Endothelial cell of umbilical vein (primary cell): ENCODE measurements at regions of chr14 and their contacts with region 1.

Region 1: DNA sequence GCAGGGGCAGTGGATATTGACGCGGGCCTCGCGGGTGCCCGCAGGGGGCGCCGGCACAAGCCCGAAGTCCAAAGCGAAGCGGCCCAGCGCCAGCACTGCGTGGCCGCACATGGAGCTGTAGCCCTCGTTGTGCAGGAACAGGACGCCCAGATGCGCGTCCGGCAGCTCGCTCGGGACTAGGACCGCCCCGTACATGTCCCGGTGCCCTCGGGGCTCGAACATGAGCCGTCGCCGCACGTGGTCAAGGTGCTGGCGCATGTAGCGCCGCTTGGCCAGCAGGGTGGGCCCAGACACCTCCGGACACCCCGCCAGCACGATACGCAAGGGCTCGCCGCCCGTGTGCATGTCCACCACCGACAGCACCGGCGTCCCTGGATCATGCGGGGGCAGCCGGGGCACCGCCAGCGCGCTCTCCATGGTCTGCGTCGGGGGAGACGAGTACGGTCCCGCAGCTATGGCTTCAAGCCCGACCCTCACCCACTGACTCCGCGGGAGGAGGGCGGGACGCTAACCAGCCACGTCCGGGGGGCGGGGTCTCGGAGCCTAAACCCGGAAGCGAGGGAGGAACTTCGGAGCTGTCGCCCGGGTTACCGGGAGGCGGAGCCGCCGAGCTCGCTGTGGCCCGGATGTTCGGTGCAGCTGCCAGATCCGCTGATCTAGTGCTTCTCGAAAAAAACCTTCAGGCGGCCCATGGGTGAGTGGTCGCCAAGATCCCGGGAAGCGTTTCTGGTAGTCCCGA is at the starts of genes JKAMP and L3HYPDH:
- DNase-seq: peak; percentile 96
- H3K4me3 ChIP-seq: peak within 1 kb of the TSS; percentile 70 to 98 (median 96)
- H3K27ac ChIP-seq: peak within 1 kb of the TSS; percentile 80
- H3K4me1 ChIP-seq: peaks cover 31% of the 10 kb centered on the region
- H3K27me3 ChIP-seq: no peaks in the 10 kb centered on the region
- CTCF ChIP-seq: peak; percentile 62 to 85
- POLR2A ChIP-seq: peak; percentile 92
- total RNA-seq, gene JKAMP: 30.8 and 39.8 TPM in 2 replicates
- total RNA-seq, gene L3HYPDH: 30.2 and 31.0 TPM in 2 replicates

Region 2: DNA sequence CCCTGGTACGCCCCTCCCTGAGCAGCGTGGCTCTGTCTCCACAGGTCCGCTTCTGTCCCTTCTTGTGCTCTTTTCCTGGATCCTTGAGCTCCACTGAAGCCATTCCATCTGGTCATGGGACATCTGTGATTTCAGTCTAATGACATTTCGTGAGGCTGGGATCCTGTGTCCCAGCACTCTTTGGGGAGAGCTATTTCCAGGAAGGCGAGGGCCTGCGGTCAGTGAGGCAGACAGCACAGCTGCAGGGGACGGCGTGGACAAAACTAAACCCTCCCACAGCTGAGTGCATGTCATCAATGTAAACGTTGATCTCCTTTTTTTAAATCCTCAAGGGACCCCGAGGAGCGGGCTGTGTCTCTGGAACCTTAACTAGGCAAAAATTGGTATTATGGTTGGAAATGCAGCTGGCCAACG is 718.6 kb before region 1 on chr14:
- CTCF ChIA-PET with region 1: no interaction called
- POLR2A ChIA-PET with region 1: no interaction called
- dilution Hi-C with region 1: no loop called
- intact Hi-C with region 1: no loop called
- DNase-seq: no peak
- H3K4me3 ChIP-seq: no peak overlapping the region
- H3K27ac ChIP-seq: no peak overlapping the region
- H3K4me1 ChIP-seq: no peaks in the 10 kb centered on the region
- H3K27me3 ChIP-seq: no peaks in the 10 kb centered on the region
- CTCF ChIP-seq: no peak
- POLR2A ChIP-seq: no peak

Region 3: DNA sequence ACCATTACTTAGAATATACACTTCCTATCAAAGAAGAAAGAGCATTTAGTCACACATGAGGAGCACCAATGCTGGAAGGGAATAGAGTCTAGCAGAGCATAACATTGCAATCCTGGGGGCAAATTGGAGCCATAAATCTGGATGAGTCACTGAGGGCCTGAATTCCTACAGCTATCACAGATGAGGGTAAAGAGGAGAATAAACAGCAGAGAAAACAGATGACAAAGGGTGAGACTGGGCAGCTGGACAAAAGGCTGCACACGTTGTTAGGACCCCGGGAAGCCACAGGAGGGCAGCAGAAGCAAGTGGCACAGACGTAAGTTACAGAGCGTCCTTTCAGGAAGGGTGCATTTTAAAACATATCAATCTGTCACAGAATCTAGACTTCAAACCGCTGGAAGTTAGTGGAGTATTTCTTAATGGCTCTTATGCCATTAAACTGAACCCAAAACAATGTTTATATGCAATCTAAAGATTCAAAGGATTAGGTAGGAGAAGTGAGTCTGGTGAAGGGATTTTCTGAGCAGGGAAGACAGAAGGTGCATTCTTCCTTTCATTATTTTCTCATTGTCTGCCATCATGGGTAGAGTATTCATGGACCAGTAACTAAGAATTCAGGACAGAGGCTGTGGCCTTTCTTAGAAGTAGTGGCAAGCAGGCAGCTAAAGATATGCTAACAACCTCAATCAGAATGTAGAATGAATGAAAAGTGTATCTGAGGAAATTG is 455.4 kb before region 1 on chr14:
- CTCF ChIA-PET with region 1: no interaction called
- POLR2A ChIA-PET with region 1: no interaction called
- dilution Hi-C with region 1: no loop called
- intact Hi-C with region 1: loop called (anchors 1 kb)
- DNase-seq: peak; percentile 66
- H3K4me3 ChIP-seq: no peak overlapping the region
- H3K27ac ChIP-seq: no peak overlapping the region
- H3K4me1 ChIP-seq: no peaks in the 10 kb centered on the region
- H3K27me3 ChIP-seq: peaks cover 5 to 8% of the 10 kb centered on the region in 2 experiments
- CTCF ChIP-seq: peak; percentile 82 to 87
- POLR2A ChIP-seq: no peak

Region 4: DNA sequence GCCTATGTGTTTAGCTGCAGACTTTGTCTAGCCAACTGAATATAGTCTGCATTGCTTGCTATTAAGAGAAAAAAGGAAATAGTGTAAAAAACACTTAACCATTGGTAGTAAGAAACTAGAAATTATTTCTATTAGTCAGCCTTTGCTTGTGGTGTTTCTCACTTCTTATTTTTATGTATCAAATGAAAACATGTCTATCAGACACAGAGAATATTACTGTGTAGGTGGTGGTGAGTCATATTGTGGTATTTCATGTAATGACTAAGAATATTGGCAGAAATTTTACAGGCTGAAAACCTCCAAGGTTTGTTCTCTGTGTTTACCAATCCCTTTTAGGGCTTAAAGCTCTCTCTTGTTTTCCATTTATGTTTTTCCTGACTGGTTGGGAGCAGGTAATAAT is 208.4 kb before region 1 on chr14:
- CTCF ChIA-PET with region 1: interaction called, 4 read pairs
- POLR2A ChIA-PET with region 1: no interaction called
- dilution Hi-C with region 1: no loop called
- intact Hi-C with region 1: loop called (anchors 5 kb)
- DNase-seq: peak; percentile 89
- H3K4me3 ChIP-seq: no peak overlapping the region
- H3K27ac ChIP-seq: peak overlapping the region; percentile 60
- H3K4me1 ChIP-seq: peaks cover 43% of the 10 kb centered on the region
- H3K27me3 ChIP-seq: no peaks in the 10 kb centered on the region
- CTCF ChIP-seq: no peak
- POLR2A ChIP-seq: no peak

Region 5: GRCh38 chr14:59464486-59465315 is 19.4 kb before region 1 on chr14:
- CTCF ChIA-PET with region 1: interaction called, 18 read pairs
- POLR2A ChIA-PET with region 1: no interaction called
- dilution Hi-C with region 1: no loop called
- intact Hi-C with region 1: loop called (anchors 1 kb)
- DNase-seq: peak; percentile 59
- H3K4me3 ChIP-seq: peak overlapping the region; percentile 18 to 48 (median 29)
- H3K27ac ChIP-seq: no peak overlapping the region
- H3K4me1 ChIP-seq: peaks cover 5% of the 10 kb centered on the region
- H3K27me3 ChIP-seq: no peaks in the 10 kb centered on the region
- CTCF ChIP-seq: no peak
- POLR2A ChIP-seq: no peak

Region 6: DNA sequence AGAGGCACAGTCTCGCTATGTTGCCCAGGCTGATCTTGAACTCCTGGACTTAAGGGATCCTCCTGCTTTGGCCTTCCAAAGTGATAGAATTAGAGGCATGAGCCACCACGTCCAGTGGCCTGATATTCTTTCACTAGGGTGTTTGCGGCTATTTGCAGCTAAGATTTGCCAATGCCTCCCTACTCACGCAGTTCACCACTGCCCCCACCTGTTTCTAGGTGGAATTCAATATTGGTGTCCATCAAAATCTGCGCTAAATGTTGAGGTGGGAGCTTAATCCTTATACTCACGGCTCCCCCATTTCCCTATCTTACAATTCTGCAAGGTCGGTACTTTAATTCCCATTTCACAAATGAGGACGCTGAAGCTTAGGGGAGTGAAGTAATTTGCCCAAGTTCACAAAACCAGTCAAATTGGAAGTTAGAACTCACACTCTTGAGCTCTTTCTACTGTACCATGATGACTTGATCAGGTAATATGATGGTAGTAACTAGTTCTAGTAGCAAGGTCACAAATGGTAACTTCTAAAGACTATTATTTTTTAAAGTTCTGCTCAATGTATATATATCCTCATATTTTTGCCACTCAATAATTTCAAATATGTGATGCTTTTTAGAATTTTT is 413.8 kb after region 1 on chr14:
- CTCF ChIA-PET with region 1: interaction called, 11 read pairs
- POLR2A ChIA-PET with region 1: no interaction called
- dilution Hi-C with region 1: no loop called
- intact Hi-C with region 1: no loop called
- DNase-seq: peak; percentile 29
- H3K4me3 ChIP-seq: no peak overlapping the region
- H3K27ac ChIP-seq: no peak overlapping the region
- H3K4me1 ChIP-seq: no peaks in the 10 kb centered on the region
- H3K27me3 ChIP-seq: peaks cover 0 to 3% of the 10 kb centered on the region in 2 experiments
- CTCF ChIP-seq: peak; percentile 37 to 39
- POLR2A ChIP-seq: no peak